Head of caudate nucleus (tissue), 42 donors: ENCODE measurements at regions of chr18 and their contacts with region 1.

Region 1: GRCh38 chr18:3585656-3586509 is 135.9 kb downstream of the TGIF1 start:
- DNase-seq: peak in 41 of 42 donors; percentile 60 to 91 (median 78)

Region 2: GRCh38 chr18:3525870-3526420 is 59.9 kb before region 1 on chr18:
- intact Hi-C with region 1: loop called (anchors 10 kb)
- DNase-seq: peak in 41 of 42 donors; percentile 19 to 82 (median 61)